Activated T-helper 2 cell treated with anti-CD3 and anti-CD28 coated beads, Interferon-gamma antibody, Interleukin-2, Interleukin-4, amounts not matched to agents 10 μg/mL and 5 μg/mL and 100 μg/mL, durations not matched to agents 14 hours and 24 hours and 36 hours (primary cell): ENCODE measurements at regions of chr19 and their contacts with region 1.

Region 1: DNA sequence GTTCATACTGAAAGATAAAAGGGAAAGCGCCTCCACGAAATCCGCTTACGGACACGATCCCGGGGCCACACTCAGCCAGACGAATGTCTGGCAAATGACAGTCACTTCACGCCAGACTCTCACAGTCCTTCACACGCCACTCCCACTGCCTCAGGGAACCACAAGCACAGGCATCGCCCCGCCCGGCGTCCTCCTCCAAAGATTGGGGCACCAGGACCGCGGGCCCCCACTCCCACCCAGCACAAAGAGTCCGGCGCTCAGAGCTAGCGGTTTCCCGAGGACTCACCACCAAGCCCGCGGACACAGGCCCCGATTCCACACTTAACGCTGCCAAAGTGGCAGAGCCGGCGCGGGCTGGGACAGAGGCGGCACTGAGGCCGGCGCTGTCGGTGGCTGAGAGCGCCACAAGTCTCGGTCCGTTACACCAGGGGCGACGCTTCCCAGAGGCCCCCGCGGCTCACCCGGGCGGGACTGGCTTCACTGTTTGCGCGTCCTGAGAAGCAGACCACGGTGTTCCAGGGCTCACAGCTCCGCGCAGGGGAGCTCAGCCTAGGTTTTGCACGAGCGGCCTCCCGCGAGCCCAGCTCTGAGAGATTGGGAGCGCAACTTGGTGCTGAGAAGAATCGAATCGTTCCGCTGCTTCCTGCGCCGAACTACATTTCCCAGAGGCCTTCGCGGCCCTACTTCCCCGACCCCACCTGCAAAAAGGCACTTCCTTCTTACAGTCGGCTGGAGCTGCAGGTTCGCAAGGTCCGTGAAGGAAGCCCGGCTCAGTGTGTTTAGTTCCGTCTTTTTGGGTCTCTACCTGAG is at the start of gene ZNF569:
- DNase-seq: peak; percentile 87
- H3K4me3 Mint-ChIP-seq: peak within 1 kb of the TSS; percentile 86
- H3K27ac Mint-ChIP-seq: peak within 1 kb of the TSS; percentile 89
- H3K4me1 Mint-ChIP-seq: peaks cover 19% of the 10 kb centered on the region
- H3K27me3 Mint-ChIP-seq: no peaks in the 10 kb centered on the region
- total RNA-seq, gene ZNF569: 3.5 and 3.8 TPM in 2 replicates

Region 2: DNA sequence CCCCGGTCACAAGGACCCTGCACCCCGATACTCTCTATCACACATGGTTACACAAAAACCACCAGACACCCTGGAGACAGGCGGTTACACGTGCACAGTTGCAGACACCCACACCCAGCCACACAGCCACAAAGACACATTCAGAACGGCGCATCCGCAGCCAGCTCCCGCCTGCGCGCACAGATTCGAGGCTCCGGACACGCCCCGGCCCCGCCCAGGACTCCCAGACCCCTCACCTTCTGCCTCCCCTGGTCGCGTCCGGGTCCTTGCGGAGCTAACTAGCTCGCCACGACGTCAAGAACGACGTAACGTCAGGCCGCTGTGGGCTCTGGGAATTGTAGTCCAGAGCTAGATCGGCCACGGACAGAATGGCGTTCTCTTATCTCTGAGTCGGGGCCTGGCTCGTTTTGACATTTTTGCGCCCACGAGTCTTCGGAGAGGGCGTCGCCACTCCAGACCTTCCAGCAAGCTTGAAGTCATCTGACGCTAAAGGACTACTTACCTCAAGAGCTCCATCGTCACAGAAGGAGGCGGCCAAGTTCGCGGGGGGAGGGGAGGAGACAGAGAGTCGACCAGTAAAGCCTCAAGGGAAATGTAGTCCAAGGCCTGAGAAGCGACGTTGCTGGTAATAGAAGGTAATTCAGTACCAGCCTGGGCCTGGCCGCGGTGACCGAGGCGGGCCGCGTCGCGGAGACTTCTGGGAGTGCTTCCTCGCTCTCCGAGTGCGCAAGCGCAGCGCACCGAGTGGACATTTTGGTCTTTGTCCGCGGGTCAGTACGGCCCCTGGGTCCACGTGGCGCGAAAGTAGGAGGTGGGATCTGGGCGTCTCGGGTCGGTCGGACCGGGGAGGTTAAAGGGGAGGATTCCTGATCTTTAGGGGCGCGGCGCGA is 1252.4 kb before region 1 on chr19 and contains the starts of genes ZNF146 and ZNF565:
- intact Hi-C with region 1: loop called (anchors 10 kb)
- DNase-seq: peak; percentile 95
- H3K4me3 Mint-ChIP-seq: no peak within 1 kb of the TSS
- H3K27ac Mint-ChIP-seq: no peak within 1 kb of the TSS
- H3K4me1 Mint-ChIP-seq: peaks cover 3% of the 10 kb centered on the region
- H3K27me3 Mint-ChIP-seq: no peaks in the 10 kb centered on the region
- total RNA-seq, gene ZNF146: 82.3 and 86.4 TPM in 2 replicates
- total RNA-seq, gene ZNF565: 1.5 and 2.4 TPM in 2 replicates

Region 3: DNA sequence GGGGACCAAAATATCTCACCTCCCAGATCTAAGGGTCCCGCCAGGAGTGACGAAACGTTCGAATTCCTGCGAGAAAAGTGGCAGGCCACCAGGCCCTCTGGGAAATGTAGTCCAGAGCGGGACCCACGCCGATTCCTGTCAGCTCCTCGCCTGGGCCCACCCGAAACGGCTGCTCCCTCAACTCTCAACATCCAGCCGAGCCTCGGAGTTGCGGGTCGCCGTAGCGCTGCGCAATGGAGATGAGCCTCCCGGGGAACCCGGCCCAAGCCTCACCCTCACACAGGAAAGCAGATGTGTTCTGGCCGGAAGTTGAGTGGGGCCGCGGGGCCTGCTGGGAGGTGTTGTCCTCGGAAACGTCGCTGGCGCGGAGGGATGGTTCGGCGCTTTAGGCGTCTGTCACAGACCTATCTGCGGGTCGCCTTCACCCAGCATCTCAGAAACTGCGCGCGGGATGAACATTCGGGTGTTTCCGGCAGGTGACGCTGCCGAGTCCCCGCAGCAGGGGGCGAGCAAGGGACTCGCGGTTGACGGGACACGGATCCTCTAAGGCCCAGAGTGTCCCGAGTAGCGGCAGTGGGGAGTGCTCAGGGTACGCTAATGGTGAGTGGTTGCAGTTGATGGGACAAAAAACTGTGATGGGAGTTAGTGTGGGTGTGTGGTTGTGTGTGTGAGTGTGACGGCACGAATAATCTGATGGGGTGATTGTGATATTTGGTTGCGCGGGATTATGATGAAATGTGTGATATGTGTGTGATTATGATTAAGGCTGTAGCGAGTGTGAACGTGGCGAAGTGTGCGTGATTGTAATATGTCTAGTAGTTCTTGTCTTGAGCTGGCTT is 550.8 kb before region 1 on chr19 and contains the starts of genes ZNF568 and ZNF829:
- intact Hi-C with region 1: loop called (anchors 5 kb)
- DNase-seq: peak; percentile 92
- H3K4me3 Mint-ChIP-seq: peak within 1 kb of the TSS; percentile 90
- H3K27ac Mint-ChIP-seq: peak within 1 kb of the TSS; percentile 93
- H3K4me1 Mint-ChIP-seq: peaks cover 20% of the 10 kb centered on the region
- H3K27me3 Mint-ChIP-seq: no peaks in the 10 kb centered on the region
- total RNA-seq, gene ZNF568: 4.5 and 6.3 TPM in 2 replicates
- total RNA-seq, gene ZNF829: 3.4 and 3.5 TPM in 2 replicates

Region 4: DNA sequence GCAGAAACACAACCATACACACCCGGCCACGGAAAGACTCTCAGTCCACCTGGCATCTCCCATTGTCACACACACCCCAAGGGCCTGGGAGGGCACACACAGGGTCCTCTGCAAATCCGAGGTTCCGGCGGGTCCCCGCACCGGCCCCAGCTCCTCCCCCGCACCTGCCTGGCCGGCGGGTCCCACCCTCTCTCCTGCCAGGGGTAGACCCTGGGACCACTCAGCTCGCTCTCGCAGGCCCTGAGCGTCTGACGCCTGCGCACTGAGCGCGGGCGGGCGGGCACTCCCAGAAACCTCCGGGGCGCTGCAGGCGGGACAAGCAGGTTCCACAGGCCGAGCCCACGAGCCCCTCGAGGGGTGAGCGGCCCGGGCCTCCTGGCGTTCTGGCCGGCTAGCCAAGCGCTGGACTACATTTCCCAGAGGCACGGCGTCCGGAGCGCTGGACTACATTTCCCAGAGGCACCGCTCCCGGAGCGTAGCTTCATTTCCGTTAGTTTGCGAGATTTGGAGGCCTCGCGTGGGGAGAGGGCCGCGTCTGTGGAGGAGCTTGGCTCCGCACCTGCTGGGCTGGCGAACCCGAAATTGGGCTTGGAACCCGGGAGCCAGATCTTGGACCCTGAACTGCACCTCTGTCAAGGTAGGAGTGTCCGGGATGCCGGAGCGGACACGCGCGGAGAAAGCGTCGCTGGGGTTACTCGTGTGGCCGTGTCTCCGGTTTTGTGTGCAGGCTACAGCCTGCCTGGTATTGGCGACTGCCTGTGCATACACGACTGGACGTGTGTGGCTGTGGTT is 388.9 kb before region 1 on chr19 and contains the start of gene ZNF420:
- intact Hi-C with region 1: loop called (anchors 5 kb)
- DNase-seq: peak; percentile 85
- H3K4me3 Mint-ChIP-seq: peak within 1 kb of the TSS; percentile 97
- H3K27ac Mint-ChIP-seq: peak within 1 kb of the TSS; percentile 82
- H3K4me1 Mint-ChIP-seq: peaks cover 13% of the 10 kb centered on the region
- H3K27me3 Mint-ChIP-seq: no peaks in the 10 kb centered on the region
- total RNA-seq, gene ZNF420: 4.7 and 5.5 TPM in 2 replicates

Region 5: DNA sequence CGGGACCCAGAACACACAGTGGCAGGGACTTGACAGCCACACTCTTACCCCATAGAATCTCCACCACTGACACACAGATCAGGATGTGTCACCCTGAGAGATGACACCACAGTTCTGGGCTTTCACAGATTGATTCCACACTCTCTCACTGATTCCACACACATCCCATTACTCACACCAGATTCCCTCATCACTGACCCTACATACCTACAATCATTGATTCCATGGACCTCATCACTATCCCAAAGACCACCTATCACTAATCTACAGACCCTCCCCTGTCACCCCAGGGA is 153.7 kb before region 1 on chr19:
- intact Hi-C with region 1: loop called (anchors 1 kb)
- DNase-seq: no peak
- H3K4me3 Mint-ChIP-seq: peak overlapping the region; percentile 27
- H3K27ac Mint-ChIP-seq: no peak overlapping the region
- H3K4me1 Mint-ChIP-seq: peaks cover 13% of the 10 kb centered on the region
- H3K27me3 Mint-ChIP-seq: no peaks in the 10 kb centered on the region

Region 6: DNA sequence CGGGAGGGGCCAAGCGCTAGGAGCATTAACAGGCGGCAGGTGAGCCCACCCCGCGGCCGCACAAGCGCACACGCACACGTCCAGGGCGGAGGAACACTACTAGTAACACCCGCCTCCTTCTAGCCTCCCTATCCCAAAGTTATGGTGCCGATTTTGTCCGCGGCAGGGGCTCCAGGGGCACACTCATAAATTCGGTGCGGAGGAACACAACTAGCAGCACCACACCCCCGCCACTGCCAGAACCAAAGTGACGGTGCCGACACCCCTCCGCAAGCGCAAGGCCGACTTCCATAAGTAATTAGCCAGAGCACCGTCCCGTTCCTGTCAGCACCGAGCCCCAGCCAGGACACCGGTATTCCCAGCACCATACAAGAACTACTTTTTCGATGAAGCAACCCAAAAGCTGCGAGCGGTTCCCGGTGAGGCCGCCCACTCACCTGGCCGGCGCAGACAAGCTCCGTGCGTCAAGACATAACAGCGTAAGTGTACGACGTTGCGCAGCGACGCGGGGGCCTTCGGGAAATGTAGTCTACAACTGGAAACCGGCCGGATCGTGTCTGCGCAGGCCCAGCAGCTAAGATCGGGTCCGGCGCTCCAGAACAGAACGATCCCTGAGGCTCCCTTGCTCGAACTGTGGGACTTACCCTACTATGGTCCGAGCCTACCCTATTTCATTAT is 127.4 kb after region 1 on chr19 and contains the starts of genes ZNF540 and ZNF571:
- intact Hi-C with region 1: loop called (anchors 2 kb)
- DNase-seq: peak; percentile 82
- H3K4me3 Mint-ChIP-seq: peak within 1 kb of the TSS; percentile 90
- H3K27ac Mint-ChIP-seq: peak within 1 kb of the TSS; percentile 88
- H3K4me1 Mint-ChIP-seq: peaks cover 17% of the 10 kb centered on the region
- H3K27me3 Mint-ChIP-seq: no peaks in the 10 kb centered on the region
- total RNA-seq, gene ZNF540: 0.41 and 0.46 TPM in 2 replicates
- total RNA-seq, gene ZNF571: 0.50 and 0.67 TPM in 2 replicates

Region 7: GRCh38 chr19:37779127-37780005 is 312.4 kb after region 1 on chr19 and contains the start of gene ZNF573:
- intact Hi-C with region 1: loop called (anchors 2 kb)
- DNase-seq: peak; percentile 67
- H3K4me3 Mint-ChIP-seq: peak within 1 kb of the TSS; percentile 96
- H3K27ac Mint-ChIP-seq: peak within 1 kb of the TSS; percentile 88
- H3K4me1 Mint-ChIP-seq: peaks cover 11% of the 10 kb centered on the region
- H3K27me3 Mint-ChIP-seq: no peaks in the 10 kb centered on the region
- total RNA-seq, gene ZNF573: 3.1 and 3.6 TPM in 2 replicates